H1 (cell line): ENCODE measurements at regions of chr20 and their contacts with region 1.

Region 1: DNA sequence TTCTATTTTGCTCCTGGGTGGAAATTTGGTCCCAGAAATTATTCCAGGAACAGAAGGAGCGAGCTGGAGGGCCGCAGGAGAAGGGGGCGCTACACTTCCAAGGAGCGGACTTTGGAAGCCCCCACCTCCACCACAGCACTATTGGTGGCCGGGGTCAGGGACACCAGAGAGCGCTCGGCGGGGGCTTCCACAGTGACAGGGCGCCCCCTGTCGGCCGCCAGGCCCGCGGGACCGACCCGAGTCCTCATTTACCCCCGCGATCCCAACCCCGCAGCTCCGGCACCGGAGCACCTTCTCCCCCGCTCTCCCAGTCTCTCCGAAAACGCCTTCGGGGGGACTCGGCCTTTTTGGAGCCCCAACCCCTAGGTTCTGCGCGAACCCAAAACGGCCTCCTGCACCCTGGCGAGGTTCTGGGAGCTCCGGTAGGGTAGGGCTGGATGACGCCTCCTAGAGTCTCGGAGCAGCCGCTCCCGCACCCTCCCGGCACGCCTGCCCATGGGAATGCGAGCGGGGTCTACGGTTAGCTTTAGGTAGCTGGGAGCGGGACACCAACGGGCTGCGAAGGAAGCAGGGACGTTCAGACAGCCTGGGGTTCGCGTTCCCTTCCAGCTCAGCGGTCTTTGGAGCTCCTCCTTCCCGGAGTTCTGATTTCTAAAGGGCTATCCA is 2.4 kb upstream of the FOXA2 start:
- DNase-seq: peak in 1 of 2 experiments; percentile 90
- H3K4me3 ChIP-seq: peak overlapping the region in 3 of 4 experiments; percentile 2 to 52 (median 19); a peak in 3 of 8 replicates
- H3K27ac ChIP-seq: no peak overlapping the region
- H3K4me1 ChIP-seq: peaks cover 9 to 21% (median 14%) of the 10 kb centered on the region in 4 experiments
- H3K27me3 ChIP-seq: peaks cover 71 to 89% (median 86%) of the 10 kb centered on the region in 4 experiments
- CTCF ChIP-seq: peak; percentile 76 to 83 (median 83)
- EP300 ChIP-seq: no peak
- POLR2A ChIP-seq: no peak
- RAD21 ChIP-seq: peak; percentile 71 to 78

Region 2: DNA sequence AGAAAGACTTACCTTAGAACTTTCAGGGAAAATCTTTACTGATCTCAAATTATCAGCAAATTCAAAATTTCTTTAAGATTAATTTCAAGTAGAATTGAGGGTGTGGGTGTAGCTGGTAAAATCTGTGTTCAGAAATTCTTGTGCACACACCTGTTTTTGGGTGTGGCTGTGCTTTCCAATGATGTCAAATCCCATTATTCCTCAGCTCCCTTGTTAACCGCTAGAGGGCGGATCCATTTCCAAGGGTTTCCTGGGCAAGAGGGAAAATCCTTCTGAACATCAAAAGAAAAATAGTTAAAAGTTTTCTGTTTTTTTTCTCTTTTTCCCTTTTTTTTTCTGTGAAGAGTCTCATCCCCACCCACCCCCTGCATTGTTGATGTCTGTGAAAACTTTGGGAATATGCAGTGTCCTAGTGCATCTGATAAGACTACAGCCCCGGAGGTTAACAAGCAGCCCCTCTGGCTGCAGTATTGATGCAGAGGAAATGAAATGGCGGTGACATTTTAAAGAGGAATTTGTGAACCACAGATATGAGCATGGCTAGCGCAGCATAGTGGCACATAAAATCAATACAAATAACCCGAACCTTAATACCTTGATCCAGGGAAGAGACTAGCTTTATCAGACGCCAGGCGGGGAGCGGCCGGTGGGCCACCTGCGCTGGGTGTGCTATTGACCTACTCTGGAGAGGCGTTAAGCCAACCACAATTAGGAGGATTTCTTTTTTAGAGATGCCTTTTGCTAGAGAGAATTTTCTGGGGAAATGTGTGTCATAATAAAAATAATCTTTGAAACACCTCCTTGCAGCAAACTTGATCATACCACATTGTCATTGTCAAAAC is 133.3 kb before region 1 on chr20:
- CTCF ChIA-PET with region 1: interaction called, 36 read pairs
- POLR2A ChIA-PET with region 1: no interaction called
- DNase-seq: no peak
- H3K4me3 ChIP-seq: no peak overlapping the region
- H3K27ac ChIP-seq: no peak overlapping the region
- H3K4me1 ChIP-seq: peaks cover 0 to 11% (median 4%) of the 10 kb centered on the region in 4 experiments; a peak in 5 of 7 replicates
- H3K27me3 ChIP-seq: peaks cover 21 to 51% (median 42%) of the 10 kb centered on the region in 4 experiments
- CTCF ChIP-seq: peak; percentile 9 to 72 (median 54)
- EP300 ChIP-seq: no peak
- POLR2A ChIP-seq: no peak
- RAD21 ChIP-seq: peak; percentile 46 to 64

Region 3: DNA sequence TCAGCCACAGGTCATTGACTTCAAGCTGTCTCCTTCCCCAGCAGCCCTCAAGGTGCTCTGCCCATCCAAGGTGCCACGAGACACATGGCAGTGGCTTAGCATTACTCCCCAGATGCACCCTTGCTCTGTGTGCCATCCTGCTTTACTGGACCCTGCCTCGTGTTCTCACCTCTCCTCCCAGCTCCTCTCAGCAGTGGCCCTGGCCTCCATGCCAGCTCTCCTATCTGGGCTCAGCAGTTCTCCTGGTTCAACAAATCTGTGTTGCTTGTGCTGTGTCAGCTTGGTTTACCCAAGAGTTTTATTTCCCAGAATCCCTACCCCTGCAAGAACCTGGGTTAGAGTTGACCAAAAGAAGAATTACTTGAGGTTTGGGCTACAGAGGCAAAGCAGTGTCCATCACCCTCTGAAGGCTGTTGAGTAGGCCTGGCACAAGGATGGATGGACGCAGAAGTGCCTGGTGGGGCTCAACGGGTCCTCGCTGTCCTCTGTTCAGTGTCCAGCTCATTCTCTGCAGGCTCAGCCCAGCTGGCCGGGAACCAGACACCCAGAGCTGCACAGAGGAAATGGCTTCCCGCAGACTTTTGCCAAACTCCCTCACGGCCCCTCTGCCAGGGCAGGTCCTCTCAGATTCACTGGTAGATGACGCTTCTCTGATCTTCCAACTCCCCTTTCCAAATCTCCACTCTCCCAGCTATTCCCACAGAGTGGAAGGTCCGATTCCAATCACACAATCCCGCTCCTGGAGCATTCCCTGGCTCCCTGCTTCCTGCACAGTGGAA is 85.0 kb before region 1 on chr20:
- CTCF ChIA-PET with region 1: interaction called, 10 read pairs
- POLR2A ChIA-PET with region 1: no interaction called
- DNase-seq: no peak
- H3K4me3 ChIP-seq: no peak overlapping the region
- H3K27ac ChIP-seq: no peak overlapping the region
- H3K4me1 ChIP-seq: no peaks in the 10 kb centered on the region
- H3K27me3 ChIP-seq: no peaks in the 10 kb centered on the region; a peak in 2 of 7 replicates
- CTCF ChIP-seq: no peak
- EP300 ChIP-seq: no peak
- POLR2A ChIP-seq: no peak
- RAD21 ChIP-seq: no peak

Region 4: DNA sequence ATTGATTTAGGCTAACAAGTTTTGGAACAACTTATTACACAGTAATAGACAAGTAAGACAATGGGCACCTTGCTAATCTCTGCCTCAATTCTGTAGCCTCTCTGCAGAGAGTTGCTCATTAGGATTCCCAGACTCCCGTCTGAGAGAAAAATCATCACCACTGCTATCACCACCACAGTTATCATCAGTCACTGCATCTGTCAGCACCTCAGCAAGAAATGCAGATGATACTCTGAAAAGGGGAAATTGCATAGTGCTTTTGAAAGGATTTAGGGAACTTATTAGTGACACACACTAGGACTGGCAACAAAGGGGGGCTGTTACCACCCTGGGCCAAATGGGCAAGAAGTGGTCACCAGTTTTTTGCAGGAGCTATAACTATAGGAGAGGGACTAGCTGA is 42.3 kb before region 1 on chr20:
- CTCF ChIA-PET with region 1: no interaction called
- POLR2A ChIA-PET with region 1: no interaction called
- DNase-seq: no peak
- H3K4me3 ChIP-seq: no peak overlapping the region
- H3K27ac ChIP-seq: no peak overlapping the region
- H3K4me1 ChIP-seq: no peaks in the 10 kb centered on the region
- H3K27me3 ChIP-seq: no peaks in the 10 kb centered on the region
- CTCF ChIP-seq: no peak
- EP300 ChIP-seq: no peak
- POLR2A ChIP-seq: no peak
- RAD21 ChIP-seq: no peak

Region 5: DNA sequence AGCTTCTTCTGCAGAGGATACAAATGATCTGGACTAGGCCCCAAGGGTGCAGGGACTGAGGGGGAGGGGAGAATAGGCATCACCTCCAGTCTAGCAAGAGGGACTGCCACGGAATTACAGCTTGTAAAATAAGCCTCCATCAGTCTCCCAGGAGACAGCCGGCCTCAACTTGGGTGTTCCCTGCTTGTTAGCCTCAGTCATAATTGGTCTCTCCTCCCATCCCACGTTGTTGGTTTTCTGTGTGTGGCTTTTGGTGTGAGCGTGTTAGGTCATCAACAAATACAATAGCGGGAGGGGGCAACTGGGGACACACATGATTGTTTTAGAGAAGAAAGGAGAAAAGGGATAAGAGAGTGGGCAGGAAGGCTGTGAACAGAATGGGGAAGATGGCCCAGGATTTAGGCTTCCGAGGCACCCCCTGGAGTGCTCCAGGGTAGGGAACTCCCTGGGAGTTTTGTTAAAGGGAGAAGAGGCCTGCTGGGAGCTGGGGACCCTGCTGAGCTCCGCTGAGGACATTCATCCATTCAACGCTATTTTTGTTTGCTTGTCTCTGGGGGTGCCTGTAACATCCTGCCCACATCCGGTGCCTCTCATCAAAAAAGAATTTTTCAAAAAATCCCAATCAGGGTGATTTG is 11.6 kb before region 1 on chr20:
- CTCF ChIA-PET with region 1: interaction called, 69 read pairs
- POLR2A ChIA-PET with region 1: interaction called, 7 read pairs
- DNase-seq: peak in 1 of 2 experiments; percentile 50
- H3K4me3 ChIP-seq: no peak overlapping the region
- H3K27ac ChIP-seq: no peak overlapping the region
- H3K4me1 ChIP-seq: peaks cover 14 to 43% (median 21%) of the 10 kb centered on the region in 4 experiments
- H3K27me3 ChIP-seq: peaks cover 92 to 99% (median 97%) of the 10 kb centered on the region in 4 experiments
- CTCF ChIP-seq: no peak
- EP300 ChIP-seq: no peak
- POLR2A ChIP-seq: no peak
- RAD21 ChIP-seq: no peak

Region 6: GRCh38 chr20:22623226-22623625 is 36.4 kb after region 1 on chr20:
- CTCF ChIA-PET with region 1: interaction called, 10 read pairs
- POLR2A ChIA-PET with region 1: no interaction called
- DNase-seq: no peak
- H3K4me3 ChIP-seq: no peak overlapping the region
- H3K27ac ChIP-seq: no peak overlapping the region
- H3K4me1 ChIP-seq: peaks cover 0 to 9% (median 6%) of the 10 kb centered on the region in 4 experiments; a peak in 4 of 7 replicates
- H3K27me3 ChIP-seq: peaks cover 0 to 10% (median 7%) of the 10 kb centered on the region in 4 experiments; a peak in 3 of 7 replicates
- CTCF ChIP-seq: peak; percentile 39 to 74 (median 63)
- EP300 ChIP-seq: no peak
- POLR2A ChIP-seq: no peak
- RAD21 ChIP-seq: no peak

Region 7: GRCh38 chr20:22698259-22698842 is 111.6 kb after region 1 on chr20:
- CTCF ChIA-PET with region 1: no interaction called
- POLR2A ChIA-PET with region 1: no interaction called
- DNase-seq: no peak
- H3K4me3 ChIP-seq: no peak overlapping the region
- H3K27ac ChIP-seq: no peak overlapping the region
- H3K4me1 ChIP-seq: no peaks in the 10 kb centered on the region
- H3K27me3 ChIP-seq: no peaks in the 10 kb centered on the region; a peak in 2 of 7 replicates
- CTCF ChIP-seq: no peak
- EP300 ChIP-seq: no peak
- POLR2A ChIP-seq: no peak
- RAD21 ChIP-seq: no peak